CD4-positive, alpha-beta T cell (primary cell): ENCODE measurements at regions of chr10 and their contacts with region 1.

Region 1: GRCh38 chr10:63166742-63167258 is 33.7 kb downstream of the NRBF2 start:
- DNase-seq: peak in 4 of 14 experiments; percentile 30 to 80 (median 72)
- ATAC-seq: peak; percentile 82
- H3K4me3 ChIP-seq: no peak overlapping the region
- H3K4me3 Mint-ChIP-seq: no peak overlapping the region
- H3K27ac ChIP-seq: no peak overlapping the region
- H3K27ac Mint-ChIP-seq: peak overlapping the region; percentile 69
- H3K4me1 ChIP-seq: no peaks in the 10 kb centered on the region
- H3K4me1 Mint-ChIP-seq: peaks cover 6% of the 10 kb centered on the region
- H3K27me3 ChIP-seq: no peaks in the 10 kb centered on the region
- H3K27me3 Mint-ChIP-seq: no peaks in the 10 kb centered on the region
- CTCF ChIP-seq: peak; percentile 88

Region 2: GRCh38 chr10:63140077-63140476 is 26.7 kb before region 1 on chr10:
- CTCF ChIA-PET with region 1: no interaction called
- POLR2A ChIA-PET with region 1: no interaction called
- intact Hi-C with region 1: no loop called
- DNase-seq: no peak
- ATAC-seq: no peak
- H3K4me3 ChIP-seq: no peak overlapping the region
- H3K4me3 Mint-ChIP-seq: no peak overlapping the region
- H3K27ac ChIP-seq: no peak overlapping the region
- H3K27ac Mint-ChIP-seq: no peak overlapping the region
- H3K4me1 ChIP-seq: peaks cover 39% of the 10 kb centered on the region
- H3K4me1 Mint-ChIP-seq: peaks cover 79% of the 10 kb centered on the region
- H3K27me3 ChIP-seq: no peaks in the 10 kb centered on the region
- H3K27me3 Mint-ChIP-seq: no peaks in the 10 kb centered on the region
- CTCF ChIP-seq: no peak

Region 3: DNA sequence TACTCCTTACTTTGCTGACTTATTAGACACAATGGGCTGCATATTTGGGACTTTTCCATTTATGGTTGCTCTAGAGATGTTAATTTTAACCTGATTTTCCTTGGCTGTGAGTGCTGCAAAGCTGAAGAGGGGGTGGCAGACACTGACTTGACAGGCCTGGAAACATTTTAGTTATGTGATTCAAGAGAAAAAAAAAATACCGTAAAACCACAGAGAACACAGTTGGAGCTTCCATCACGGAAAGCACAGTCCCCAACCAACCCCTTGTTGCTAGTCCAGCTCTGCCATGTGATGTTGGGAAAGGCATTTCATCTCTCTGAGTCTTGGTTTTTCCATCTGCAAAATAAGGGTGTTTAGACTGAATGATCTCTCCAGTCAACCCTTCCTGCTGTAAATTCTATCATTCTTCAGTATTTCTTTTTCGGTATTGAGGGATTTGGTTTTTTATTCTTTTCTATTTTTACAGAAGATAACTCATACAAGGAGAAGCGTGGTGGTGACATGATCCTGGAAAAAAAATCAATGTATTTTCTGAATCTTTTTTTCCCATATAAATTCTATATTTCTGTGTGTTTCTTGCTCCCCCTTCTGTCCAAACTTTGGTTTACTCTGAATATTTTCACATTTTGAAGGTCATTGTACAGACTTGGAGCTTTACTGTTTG is 600.5 kb after region 1 on chr10:
- CTCF ChIA-PET with region 1: no interaction called
- POLR2A ChIA-PET with region 1: no interaction called
- intact Hi-C with region 1: loop called in 1 of 2 experiments (anchors 2 kb)
- DNase-seq: peak in 2 of 14 experiments; percentile 1 to 4
- ATAC-seq: no peak
- H3K4me3 ChIP-seq: no peak overlapping the region
- H3K4me3 Mint-ChIP-seq: no peak overlapping the region
- H3K27ac ChIP-seq: no peak overlapping the region
- H3K27ac Mint-ChIP-seq: no peak overlapping the region
- H3K4me1 ChIP-seq: no peaks in the 10 kb centered on the region
- H3K4me1 Mint-ChIP-seq: no peaks in the 10 kb centered on the region
- H3K27me3 ChIP-seq: peaks cover 0 to 4% of the 10 kb centered on the region in 2 experiments
- H3K27me3 Mint-ChIP-seq: no peaks in the 10 kb centered on the region
- CTCF ChIP-seq: no peak

Region 4: GRCh38 chr10:63976538-63976937 is 809.7 kb after region 1 on chr10:
- CTCF ChIA-PET with region 1: no interaction called
- POLR2A ChIA-PET with region 1: no interaction called
- intact Hi-C with region 1: loop called in 1 of 2 experiments (anchors 5 kb)
- DNase-seq: peak in 3 of 14 experiments; percentile 7 to 18 (median 11)
- ATAC-seq: no peak
- H3K4me3 ChIP-seq: no peak overlapping the region
- H3K4me3 Mint-ChIP-seq: no peak overlapping the region
- H3K27ac ChIP-seq: no peak overlapping the region
- H3K27ac Mint-ChIP-seq: no peak overlapping the region
- H3K4me1 ChIP-seq: no peaks in the 10 kb centered on the region
- H3K4me1 Mint-ChIP-seq: no peaks in the 10 kb centered on the region
- H3K27me3 ChIP-seq: no peaks in the 10 kb centered on the region
- H3K27me3 Mint-ChIP-seq: no peaks in the 10 kb centered on the region
- CTCF ChIP-seq: no peak